ENCODE measurements at regions of chr2 and their contacts with region 1.

Region 1: GRCh38 chr2:55050133-55050994 is at the start of gene RTN4:
- DNase-seq: peak; percentile 99
- ATAC-seq: peak; percentile 94
- total RNA-seq, gene RTN4: 78.4 TPM

Region 2: GRCh38 chr2:55099878-55100820 is 49.8 kb after region 1 on chr2:
- intact Hi-C with region 1: loop called (anchors 5 kb)
- DNase-seq: no peak
- ATAC-seq: peak; percentile 63

Region 3: DNA sequence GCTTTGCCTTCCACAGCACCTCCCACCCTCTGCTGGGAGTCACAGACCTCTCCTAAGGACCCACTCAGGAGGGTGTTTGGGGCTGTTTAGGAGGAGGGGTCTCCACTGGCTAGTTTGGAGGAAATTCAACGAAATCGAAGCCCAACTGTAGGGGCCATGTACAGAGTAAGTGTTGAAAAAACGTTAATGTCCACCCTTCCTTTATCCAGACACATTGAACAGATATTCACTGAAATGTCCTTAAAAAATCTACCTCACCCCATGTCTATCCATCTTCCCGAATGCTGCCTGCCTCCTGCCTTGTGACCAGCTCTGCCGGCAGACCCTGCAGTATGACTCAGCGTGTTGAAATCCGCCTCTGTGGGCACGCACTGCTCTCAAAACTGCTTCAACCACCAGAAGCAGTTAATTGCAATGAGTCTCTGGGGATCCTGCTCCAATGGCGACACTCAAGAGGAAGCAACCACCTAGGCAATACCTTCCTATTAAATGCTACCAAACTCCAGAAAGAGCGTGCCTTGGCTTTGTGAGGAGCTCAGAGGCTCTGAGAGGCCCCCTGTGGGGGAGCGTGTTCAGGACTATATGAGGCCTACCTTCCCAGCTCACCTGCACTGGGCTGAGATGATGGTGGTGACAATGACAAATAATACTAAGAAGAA is 61.3 kb after region 1 on chr2:
- intact Hi-C with region 1: loop called (anchors 5 kb)
- DNase-seq: no peak
- ATAC-seq: peak; percentile 53

Region 4: GRCh38 chr2:55159037-55159651 is 108.8 kb after region 1 on chr2:
- intact Hi-C with region 1: loop called (anchors 2 kb)
- DNase-seq: peak; percentile 76
- ATAC-seq: peak; percentile 48